ENCODE measurements at regions of chr9 and their contacts with region 1.

Region 1: DNA sequence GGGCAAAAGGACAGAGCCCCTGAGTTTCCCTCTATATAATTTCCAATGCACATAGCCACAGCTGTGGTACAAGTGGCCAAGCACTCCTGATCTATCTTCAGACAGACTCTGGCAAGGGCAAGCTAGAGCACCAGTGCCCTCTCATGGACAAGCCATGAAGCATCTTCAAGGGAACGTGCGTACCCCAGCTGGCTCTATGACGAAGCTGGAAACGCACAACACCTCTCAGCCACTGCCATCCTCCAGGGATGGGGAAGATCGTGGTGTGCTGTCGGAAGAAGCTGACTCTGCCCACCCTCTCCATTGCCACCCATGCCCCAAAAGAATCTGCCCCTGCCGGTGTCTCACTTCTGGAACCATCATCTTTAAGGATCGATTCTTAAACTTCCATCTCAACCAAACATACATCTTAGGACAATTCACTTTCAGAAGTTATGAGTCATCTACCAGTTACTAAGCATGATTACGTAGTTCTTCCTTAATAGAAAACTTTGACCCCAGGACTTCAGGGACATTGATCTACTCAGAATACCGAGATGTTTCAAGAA is 482.9 kb downstream of the AGTPBP1 start:
- DNase-seq: peak; percentile 47 to 67
- H3K4me3 ChIP-seq: no peak overlapping the region
- H3K27ac ChIP-seq: no peak overlapping the region
- H3K4me1 ChIP-seq: no peaks in the 10 kb centered on the region
- H3K27me3 ChIP-seq: no peaks in the 10 kb centered on the region
- CTCF ChIP-seq: peak; percentile 87 to 98 (median 91)
- EP300 ChIP-seq: no peak
- POLR2A ChIP-seq: no peak
- RAD21 ChIP-seq: peak; percentile 98 to 99

Region 2: DNA sequence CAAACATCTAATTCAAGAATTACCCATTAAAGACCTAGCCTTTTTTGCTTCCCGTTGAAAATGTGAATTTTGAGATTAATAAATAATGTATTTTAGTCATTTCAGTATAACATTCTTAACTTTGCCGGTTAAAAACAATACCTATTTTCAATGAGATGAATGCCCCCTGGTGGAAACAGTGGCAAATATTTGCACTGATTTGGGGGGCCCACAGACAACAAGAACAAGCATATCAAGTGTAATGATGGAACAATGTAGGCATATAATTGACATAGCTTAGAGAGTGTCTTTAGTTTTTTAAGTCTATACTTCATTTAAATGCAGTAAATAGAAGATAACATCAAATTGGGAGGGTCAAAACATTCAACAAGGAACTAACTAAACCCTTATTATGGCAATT is 477.4 kb before region 1 on chr9:
- CTCF ChIA-PET with region 1: interaction called, 10 read pairs
- POLR2A ChIA-PET with region 1: no interaction called
- DNase-seq: no peak
- H3K4me3 ChIP-seq: no peak overlapping the region
- H3K27ac ChIP-seq: no peak overlapping the region
- H3K4me1 ChIP-seq: no peaks in the 10 kb centered on the region
- H3K27me3 ChIP-seq: no peaks in the 10 kb centered on the region
- CTCF ChIP-seq: peak in 2 of 3 experiments; percentile 49 to 51; a peak in 2 of 4 replicates
- EP300 ChIP-seq: no peak
- POLR2A ChIP-seq: no peak
- RAD21 ChIP-seq: peak; percentile 64 to 69

Region 3: DNA sequence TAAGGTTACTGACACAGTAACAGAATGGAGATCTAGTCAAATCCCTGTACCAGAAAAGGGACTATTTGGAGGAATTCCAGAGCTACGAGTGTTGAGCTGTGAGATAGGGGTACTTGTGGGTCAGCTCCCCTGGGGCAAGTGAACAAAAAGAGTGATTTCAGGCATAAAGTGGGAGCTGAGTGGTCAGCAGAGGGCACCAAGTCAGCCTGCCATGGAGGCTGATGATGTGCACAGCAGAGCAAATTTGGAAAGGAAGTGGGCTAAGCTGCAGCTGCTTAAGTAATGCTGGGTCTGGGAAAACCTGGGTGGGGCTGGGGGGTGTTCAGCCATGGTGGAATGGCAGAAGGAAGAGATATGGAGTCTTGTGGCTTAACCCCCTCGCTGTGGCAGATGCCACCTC is 261.4 kb before region 1 on chr9:
- CTCF ChIA-PET with region 1: interaction called, 14 read pairs
- POLR2A ChIA-PET with region 1: no interaction called
- DNase-seq: no peak
- H3K4me3 ChIP-seq: no peak overlapping the region
- H3K27ac ChIP-seq: no peak overlapping the region
- H3K4me1 ChIP-seq: peaks cover 0 to 10% (median under 1%) of the 10 kb centered on the region in 4 experiments; a peak in 4 of 7 replicates
- H3K27me3 ChIP-seq: no peaks in the 10 kb centered on the region
- CTCF ChIP-seq: peak; percentile 13 to 42 (median 23); a peak in 3 of 4 replicates
- EP300 ChIP-seq: no peak
- POLR2A ChIP-seq: no peak
- RAD21 ChIP-seq: peak; percentile 43 to 54

Region 4: DNA sequence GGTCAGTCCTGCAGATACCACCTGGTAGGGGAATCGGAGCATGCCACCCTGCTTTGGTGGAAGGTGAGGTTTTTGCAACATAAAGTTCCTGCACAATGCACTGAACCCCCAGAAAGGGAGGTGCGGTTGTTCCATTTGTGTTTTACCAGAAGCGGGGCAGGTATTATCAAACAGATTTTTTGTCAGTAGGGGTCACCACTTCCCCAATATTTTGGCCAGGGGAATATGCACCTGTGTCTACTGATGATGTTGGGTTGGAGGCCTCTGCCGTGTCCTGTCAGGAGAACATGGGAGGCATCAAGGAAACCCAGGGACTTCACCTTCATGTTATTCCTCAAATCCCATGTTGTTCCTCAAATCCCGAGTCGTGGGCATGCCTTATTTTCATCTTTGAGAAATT is 150.7 kb before region 1 on chr9:
- CTCF ChIA-PET with region 1: interaction called, 16 read pairs
- POLR2A ChIA-PET with region 1: no interaction called
- DNase-seq: no peak
- H3K4me3 ChIP-seq: no peak overlapping the region
- H3K27ac ChIP-seq: no peak overlapping the region
- H3K4me1 ChIP-seq: no peaks in the 10 kb centered on the region
- H3K27me3 ChIP-seq: no peaks in the 10 kb centered on the region
- CTCF ChIP-seq: no peak
- EP300 ChIP-seq: no peak
- POLR2A ChIP-seq: no peak
- RAD21 ChIP-seq: peak; percentile 49 to 61

Region 5: GRCh38 chr9:85212887-85213286 is 46.0 kb before region 1 on chr9:
- CTCF ChIA-PET with region 1: no interaction called
- POLR2A ChIA-PET with region 1: no interaction called
- DNase-seq: no peak
- H3K4me3 ChIP-seq: no peak overlapping the region
- H3K27ac ChIP-seq: no peak overlapping the region
- H3K4me1 ChIP-seq: peaks cover 2 to 9% (median 7%) of the 10 kb centered on the region in 4 experiments; a peak in 4 of 7 replicates
- H3K27me3 ChIP-seq: no peaks in the 10 kb centered on the region
- CTCF ChIP-seq: no peak
- EP300 ChIP-seq: no peak
- POLR2A ChIP-seq: no peak
- RAD21 ChIP-seq: no peak

Measured in H1 (cell line).